Breast epithelium (tissue), 4 donors: ENCODE measurements at regions of chr10 and their contacts with region 1.

Region 1: DNA sequence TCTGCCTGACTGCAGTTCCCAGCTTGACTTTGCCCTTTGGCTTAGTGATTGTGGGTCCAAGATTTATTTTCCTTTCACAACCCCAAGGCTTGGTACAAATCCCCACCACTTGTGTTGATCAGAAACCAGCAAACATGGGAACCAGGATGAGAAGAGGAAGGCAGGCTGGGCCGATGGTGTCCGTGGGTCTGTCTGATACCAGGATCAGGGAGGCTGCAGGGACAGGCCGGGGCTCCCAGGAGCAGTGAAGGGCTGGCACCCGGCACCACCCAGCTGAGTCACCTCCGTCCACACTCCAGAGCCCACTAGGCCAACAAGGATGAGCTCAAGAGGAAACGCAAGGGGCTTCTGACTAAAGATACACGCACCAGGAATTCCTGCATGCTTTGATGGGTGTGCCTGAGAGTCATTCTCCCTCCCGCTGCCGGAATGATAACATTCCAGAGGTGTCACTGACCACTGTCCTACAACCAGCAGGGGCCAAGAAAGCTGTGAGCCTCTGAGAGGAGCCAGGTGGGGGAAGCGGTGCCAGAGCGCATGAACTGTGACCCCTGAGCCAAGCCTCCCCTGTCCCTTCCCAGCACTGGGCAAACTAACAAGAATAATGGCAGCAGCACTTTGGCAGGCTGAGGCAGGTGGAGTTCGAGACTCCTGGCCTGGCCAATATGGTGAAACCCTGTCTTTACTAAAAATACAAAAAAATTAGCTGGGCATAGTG is 29.2 kb upstream of the PROSER2 start:
- DNase-seq: no peak
- H3K4me3 ChIP-seq: no peak overlapping the region
- H3K27ac ChIP-seq: no peak overlapping the region
- H3K4me1 ChIP-seq: no peaks in the 10 kb centered on the region
- H3K27me3 ChIP-seq: no peaks in the 10 kb centered on the region
- CTCF ChIP-seq: no peak
- POLR2A ChIP-seq: no peak

Region 2: GRCh38 chr10:11515596-11516430 is 278.1 kb before region 1 on chr10:
- intact Hi-C with region 1: no loop called
- DNase-seq: peak in 1 of 2 donors; percentile 46
- H3K4me3 ChIP-seq: no peak overlapping the region
- H3K27ac ChIP-seq: no peak overlapping the region
- H3K4me1 ChIP-seq: no peaks in the 10 kb centered on the region
- H3K27me3 ChIP-seq: no peaks in the 10 kb centered on the region
- CTCF ChIP-seq: peak; percentile 15 to 83 (median 81)
- POLR2A ChIP-seq: no peak

Region 3: GRCh38 chr10:11823122-11823988 is 29.4 kb after region 1 on chr10 and contains the start of gene PROSER2:
- intact Hi-C with region 1: no loop called
- DNase-seq: peak; percentile 30 to 56
- H3K4me3 ChIP-seq: peak within 1 kb of the TSS; percentile 69 to 93 (median 89)
- H3K27ac ChIP-seq: peak within 1 kb of the TSS; percentile 81 to 88
- H3K4me1 ChIP-seq: no peaks in the 10 kb centered on the region
- H3K27me3 ChIP-seq: no peaks in the 10 kb centered on the region
- CTCF ChIP-seq: no peak
- POLR2A ChIP-seq: no peak
- total RNA-seq, gene PROSER2: 2.9 to 9.5 (median 8.5) TPM

Region 4: DNA sequence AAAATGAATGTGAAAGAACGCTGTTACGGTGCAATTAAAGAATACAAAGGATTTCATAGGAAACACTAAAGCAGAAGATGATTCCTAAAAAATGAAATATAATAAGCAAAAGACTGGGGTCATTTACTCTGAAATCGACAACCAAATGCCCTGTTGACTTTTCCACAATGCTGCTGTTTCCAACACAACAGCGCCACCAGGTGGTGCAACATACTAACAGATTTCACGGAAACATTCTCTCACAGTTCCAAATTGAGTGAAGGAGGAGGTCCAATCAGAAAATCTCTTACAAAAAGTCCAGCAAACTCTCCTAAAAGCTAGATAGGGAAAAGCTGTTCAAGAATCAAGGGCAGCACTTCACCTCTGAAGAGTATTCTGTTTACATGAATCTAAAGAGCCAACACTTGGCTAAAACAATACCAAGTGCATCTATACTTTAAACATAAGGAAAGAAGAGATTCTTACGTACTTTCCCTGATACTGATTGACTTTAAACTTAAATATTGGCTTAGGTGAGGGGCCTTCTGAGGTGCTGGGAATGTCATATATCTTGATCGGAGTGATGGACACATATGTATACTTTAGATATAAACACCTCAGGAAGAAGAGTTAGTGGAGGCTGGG is 192.8 kb after region 1 on chr10:
- intact Hi-C with region 1: loop called (anchors 10 kb)
- DNase-seq: peak; percentile 56 to 71
- H3K4me3 ChIP-seq: no peak overlapping the region
- H3K27ac ChIP-seq: no peak overlapping the region
- H3K4me1 ChIP-seq: no peaks in the 10 kb centered on the region
- H3K27me3 ChIP-seq: no peaks in the 10 kb centered on the region
- CTCF ChIP-seq: peak; percentile 68 to 88 (median 81)
- POLR2A ChIP-seq: no peak